AG04449 (cell line): ENCODE measurements at regions of chr18 and their contacts with region 1.

Region 1: GRCh38 chr18:70428439-70428838 is 139.6 kb downstream of the SOCS6 start:
- DNase-seq: no peak
- H3K4me3 ChIP-seq: no peak overlapping the region
- CTCF ChIP-seq: no peak

Region 2: GRCh38 chr18:70172225-70172624 is 256.2 kb before region 1 on chr18:
- CTCF ChIA-PET with region 1: interaction called, 60 read pairs
- POLR2A ChIA-PET with region 1: no interaction called
- DNase-seq: no peak
- H3K4me3 ChIP-seq: no peak overlapping the region
- CTCF ChIP-seq: peak; percentile 30

Region 3: GRCh38 chr18:70195852-70196434 is 232.5 kb before region 1 on chr18:
- CTCF ChIA-PET with region 1: interaction called, 471 read pairs
- POLR2A ChIA-PET with region 1: interaction called, 3 read pairs
- DNase-seq: no peak
- H3K4me3 ChIP-seq: no peak overlapping the region
- CTCF ChIP-seq: peak; percentile 63

Region 4: DNA sequence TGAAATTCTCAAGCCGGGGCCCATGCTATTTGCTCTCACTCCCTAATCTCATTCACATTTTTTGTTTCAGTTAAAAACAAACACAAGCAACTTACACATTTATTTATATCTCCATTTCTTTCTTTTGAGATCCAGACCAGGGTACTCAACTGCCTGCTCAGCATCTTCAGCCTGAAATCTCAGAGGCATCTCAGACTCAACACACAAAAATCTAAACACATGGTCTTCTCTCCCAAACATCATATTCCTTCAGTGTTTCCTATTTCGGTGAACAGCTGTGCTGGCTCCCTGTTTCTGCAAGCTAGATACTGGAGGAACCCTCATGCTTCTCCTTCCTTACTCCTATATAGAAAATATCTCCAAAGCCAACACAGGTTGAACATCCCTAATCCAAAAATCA is 211.7 kb before region 1 on chr18:
- CTCF ChIA-PET with region 1: interaction called, 12 read pairs
- POLR2A ChIA-PET with region 1: no interaction called
- DNase-seq: no peak
- H3K4me3 ChIP-seq: no peak overlapping the region
- CTCF ChIP-seq: no peak

Region 5: DNA sequence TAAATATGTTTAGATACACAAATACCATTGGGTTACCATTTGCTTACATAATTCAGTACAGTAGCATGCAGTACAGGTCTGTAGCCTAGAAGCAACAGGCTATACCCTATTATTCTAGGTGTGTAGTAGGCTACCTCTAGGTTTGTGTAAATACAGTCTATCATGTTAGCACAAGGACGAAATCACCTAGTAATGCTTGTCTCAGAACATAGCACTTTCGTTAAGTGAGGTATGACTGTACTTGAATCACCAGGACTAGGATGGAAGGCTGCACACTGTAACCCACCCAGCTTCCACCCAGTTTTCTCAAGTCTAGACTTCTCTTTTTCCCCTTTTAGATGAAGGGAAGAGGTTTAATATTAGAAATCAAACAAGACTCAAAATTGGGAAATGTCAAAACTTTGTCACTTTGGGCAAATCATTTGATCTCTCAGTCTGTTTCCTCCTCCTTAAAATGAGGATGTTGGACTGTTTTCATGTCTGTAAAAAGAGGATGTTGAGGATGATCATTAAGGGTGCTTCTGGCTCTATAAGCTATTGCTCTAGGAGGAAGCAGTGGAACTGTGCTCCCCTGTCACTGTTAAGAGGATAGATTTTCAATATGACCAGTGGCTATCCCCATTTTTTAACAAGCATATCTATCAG is 143.3 kb before region 1 on chr18:
- CTCF ChIA-PET with region 1: interaction called, 11 read pairs
- POLR2A ChIA-PET with region 1: no interaction called
- DNase-seq: no peak
- H3K4me3 ChIP-seq: no peak overlapping the region
- CTCF ChIP-seq: no peak

Region 6: GRCh38 chr18:70454704-70455322 is 26.4 kb after region 1 on chr18:
- CTCF ChIA-PET with region 1: interaction called, 213 read pairs
- POLR2A ChIA-PET with region 1: no interaction called
- DNase-seq: peak; percentile 24
- H3K4me3 ChIP-seq: no peak overlapping the region
- CTCF ChIP-seq: peak; percentile 69